Mammary epithelial cell (primary cell): ENCODE measurements at regions of chr2 and their contacts with region 1.

Region 1: GRCh38 chr2:231590619-231591018 is 2.0 kb upstream of the TEX44 start:
- DNase-seq: no peak
- H3K4me3 ChIP-seq: no peak overlapping the region
- H3K27ac ChIP-seq: no peak overlapping the region
- H3K4me1 ChIP-seq: no peaks in the 10 kb centered on the region
- H3K27me3 ChIP-seq: peaks cover 3% of the 10 kb centered on the region
- CTCF ChIP-seq: no peak

Region 2: GRCh38 chr2:231463698-231464575 is 126.7 kb before region 1 on chr2 and contains the start of gene NCL:
- CTCF ChIA-PET with region 1: no interaction called
- dilution Hi-C with region 1: loop called (anchors 5 kb)
- in situ Hi-C with region 1: no loop called
- intact Hi-C with region 1: no loop called
- DNase-seq: peak; percentile 98
- H3K4me3 ChIP-seq: peak within 1 kb of the TSS; percentile 95 to 100 (median 96)
- H3K27ac ChIP-seq: peak within 1 kb of the TSS; percentile 92
- H3K4me1 ChIP-seq: peaks cover 19% of the 10 kb centered on the region
- H3K27me3 ChIP-seq: no peaks in the 10 kb centered on the region
- CTCF ChIP-seq: no peak
- total RNA-seq, gene NCL: 98.0 to 671 TPM

Region 3: DNA sequence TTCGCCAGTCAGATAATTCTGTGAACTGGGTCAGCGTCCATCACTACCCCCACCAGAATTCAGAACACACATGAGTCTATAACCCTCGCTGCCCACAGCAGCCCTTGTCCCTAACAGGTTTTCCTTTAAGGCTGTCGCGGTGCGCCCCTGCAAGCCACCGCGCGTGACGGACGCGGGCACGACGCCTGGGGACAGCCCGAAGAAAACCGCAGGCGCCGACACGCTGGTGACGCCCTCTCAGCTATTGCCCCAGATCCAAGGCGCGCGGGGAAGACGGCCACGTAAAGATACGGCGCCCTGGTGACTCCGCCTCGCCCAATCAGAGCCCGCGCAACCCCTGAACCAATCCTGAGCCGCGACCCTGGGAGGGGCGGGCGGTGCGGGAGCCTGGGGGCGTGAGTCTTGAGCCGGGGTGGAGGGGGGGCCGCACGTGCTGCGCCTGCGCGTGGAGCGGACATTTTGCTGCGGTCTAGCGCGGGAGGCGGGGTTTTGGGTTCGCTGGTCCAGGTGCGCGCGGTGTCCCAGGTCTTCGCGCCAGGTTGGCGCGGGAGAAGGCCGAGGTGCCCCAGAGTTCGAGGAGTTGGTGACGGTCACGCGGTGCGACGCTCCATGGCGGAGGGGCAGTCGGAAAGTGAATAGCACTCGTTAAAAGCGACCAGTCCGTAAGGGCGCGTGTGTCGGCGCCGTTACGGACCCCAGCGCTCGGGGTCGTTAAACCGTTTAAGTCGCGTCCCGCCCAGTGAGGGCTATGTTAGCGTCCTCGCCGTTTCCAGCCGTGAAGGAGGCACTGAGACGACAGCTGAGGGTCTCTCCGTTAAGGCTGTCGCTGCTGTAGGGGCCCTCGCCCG is 76.3 kb before region 1 on chr2:
- CTCF ChIA-PET with region 1: no interaction called
- dilution Hi-C with region 1: loop called (anchors 5 kb)
- in situ Hi-C with region 1: no loop called
- intact Hi-C with region 1: no loop called
- DNase-seq: peak; percentile 97
- H3K4me3 ChIP-seq: peak overlapping the region; percentile 68 to 89 (median 73)
- H3K27ac ChIP-seq: peak overlapping the region; percentile 83
- H3K4me1 ChIP-seq: peaks cover 6% of the 10 kb centered on the region
- H3K27me3 ChIP-seq: no peaks in the 10 kb centered on the region
- CTCF ChIP-seq: no peak

Region 4: DNA sequence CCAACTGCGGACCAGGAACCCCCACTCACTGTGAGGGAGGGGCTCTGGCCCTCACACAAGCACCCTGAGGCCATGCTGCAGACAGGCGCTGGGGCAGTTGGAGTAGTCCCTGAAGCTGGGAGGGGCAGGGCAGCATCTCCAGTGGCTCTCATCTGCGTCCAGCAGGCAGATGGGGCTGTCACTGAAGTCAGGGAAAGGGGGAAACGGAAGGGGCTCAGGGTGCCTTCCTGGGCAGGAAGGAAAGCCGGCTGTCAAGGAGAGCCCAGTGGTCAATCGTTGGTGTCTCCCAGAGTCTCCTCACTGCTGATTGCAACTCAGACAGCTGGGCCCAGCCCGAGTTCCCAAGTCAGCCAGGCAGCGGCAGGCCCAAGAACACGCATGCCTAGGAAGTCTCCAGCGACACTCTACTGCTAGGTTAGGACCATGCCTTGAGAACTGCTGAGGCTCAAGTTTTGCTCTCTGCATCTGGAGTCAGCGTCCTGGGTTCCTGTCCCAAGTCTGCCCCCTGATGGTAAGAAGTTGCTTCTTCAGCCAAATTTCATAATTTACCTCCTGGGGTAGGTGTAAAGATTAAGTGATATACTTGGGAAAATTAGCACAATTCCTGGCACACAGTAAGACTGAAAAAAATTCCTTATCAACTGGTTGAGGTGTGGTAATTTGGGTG is 32.9 kb before region 1 on chr2:
- CTCF ChIA-PET with region 1: no interaction called
- dilution Hi-C with region 1: loop called (anchors 5 kb)
- in situ Hi-C with region 1: no loop called
- intact Hi-C with region 1: no loop called
- DNase-seq: peak; percentile 50
- H3K4me3 ChIP-seq: no peak overlapping the region
- H3K27ac ChIP-seq: no peak overlapping the region
- H3K4me1 ChIP-seq: no peaks in the 10 kb centered on the region
- H3K27me3 ChIP-seq: no peaks in the 10 kb centered on the region
- CTCF ChIP-seq: peak; percentile 62 to 78

Region 5: DNA sequence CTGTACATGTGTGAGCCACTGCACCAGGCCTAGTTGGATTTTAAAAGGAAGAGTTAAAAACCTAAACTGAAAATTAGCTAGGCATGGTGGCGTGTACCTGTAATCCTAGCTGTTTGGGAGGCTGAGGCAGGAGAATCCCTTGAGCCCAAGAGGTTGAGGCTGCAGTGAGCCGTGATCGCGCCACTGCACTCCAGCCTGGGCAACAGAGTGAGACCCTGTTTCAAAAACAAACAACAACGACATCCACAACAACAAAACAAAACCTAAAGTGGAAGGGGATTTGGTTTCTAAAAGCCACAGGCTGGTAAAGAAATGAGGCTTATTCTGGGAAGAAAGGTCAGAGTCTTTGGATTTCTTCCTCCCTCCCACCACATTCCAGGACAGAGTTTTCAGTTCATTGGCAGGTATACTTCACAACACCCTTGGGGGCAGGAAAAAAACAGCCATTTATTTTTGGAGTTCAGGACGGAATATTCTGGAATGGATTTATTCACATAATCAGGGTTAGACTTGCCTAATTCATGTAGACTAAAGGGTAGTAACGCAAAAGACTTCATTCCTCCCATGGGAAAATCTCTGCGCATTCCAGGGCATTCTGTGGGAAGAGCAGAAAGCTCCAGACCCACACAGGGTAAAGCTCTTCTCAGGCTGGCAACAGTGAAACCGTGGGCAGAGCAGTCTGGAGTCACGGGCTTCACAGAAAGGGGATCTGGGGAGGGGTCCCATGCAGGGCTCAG is 36.9 kb after region 1 on chr2:
- CTCF ChIA-PET with region 1: no interaction called
- dilution Hi-C with region 1: loop called (anchors 5 kb)
- in situ Hi-C with region 1: no loop called
- intact Hi-C with region 1: no loop called
- DNase-seq: no peak
- H3K4me3 ChIP-seq: no peak overlapping the region
- H3K27ac ChIP-seq: no peak overlapping the region
- H3K4me1 ChIP-seq: peaks cover 4% of the 10 kb centered on the region
- H3K27me3 ChIP-seq: no peaks in the 10 kb centered on the region
- CTCF ChIP-seq: no peak

Region 6: DNA sequence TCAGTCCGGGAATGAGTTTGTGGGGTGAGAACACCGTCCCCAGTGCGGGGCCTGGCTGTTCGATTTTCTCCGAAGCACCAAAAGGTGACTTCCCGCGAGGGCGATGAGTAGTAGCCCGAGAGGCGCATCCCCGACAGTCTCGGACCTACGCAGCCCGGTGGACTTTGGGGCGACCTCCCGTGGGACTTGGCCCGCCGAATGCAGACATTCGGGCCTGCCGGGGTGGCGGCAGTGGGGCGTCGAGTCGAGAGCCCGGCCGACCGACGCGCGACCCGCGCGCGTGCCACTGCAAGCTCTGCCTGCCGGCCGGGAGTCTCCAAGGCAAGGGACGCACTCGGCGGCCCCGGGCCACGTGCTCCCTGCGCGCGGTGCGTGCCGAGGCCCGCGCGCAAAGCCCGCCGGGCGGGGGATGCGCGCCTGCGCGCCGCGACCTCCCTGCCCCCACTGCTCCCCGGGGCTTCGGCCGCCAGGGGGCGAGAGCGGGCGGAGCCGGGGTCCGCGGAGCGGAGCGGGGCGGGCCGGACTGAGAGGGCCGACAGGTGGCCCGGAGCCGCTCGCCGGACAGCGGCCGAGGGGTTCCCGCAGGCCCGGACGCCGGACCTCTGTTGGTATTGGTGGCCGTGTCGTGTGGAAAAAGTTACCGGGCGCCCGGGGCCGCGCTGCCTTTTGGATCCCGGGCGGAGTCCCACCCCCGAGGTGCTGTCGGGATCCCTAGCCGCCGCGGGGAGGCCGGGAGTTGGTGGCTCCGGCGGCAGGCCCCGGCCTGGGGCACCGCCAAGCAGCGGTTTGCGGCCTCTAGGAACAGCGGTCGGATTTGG is 119.6 kb after region 1 on chr2:
- CTCF ChIA-PET with region 1: no interaction called
- dilution Hi-C with region 1: no loop called
- in situ Hi-C with region 1: no loop called
- intact Hi-C with region 1: no loop called
- DNase-seq: peak; percentile 84
- H3K4me3 ChIP-seq: peak overlapping the region; percentile 67 to 87 (median 81)
- H3K27ac ChIP-seq: peak overlapping the region; percentile 70
- H3K4me1 ChIP-seq: peaks cover 29% of the 10 kb centered on the region
- H3K27me3 ChIP-seq: no peaks in the 10 kb centered on the region
- CTCF ChIP-seq: peak; percentile 60 to 62